Mammary epithelial cell (primary cell): ENCODE measurements at regions of chr6 and their contacts with region 1.

Region 1: GRCh38 chr6:111259089-111259831 is 172.0 kb downstream of the SLC16A10 start:
- DNase-seq: peak; percentile 98
- H3K4me3 ChIP-seq: peak overlapping the region; percentile 65 to 84 (median 80)
- H3K27ac ChIP-seq: peak overlapping the region; percentile 68
- H3K4me1 ChIP-seq: peaks cover 22% of the 10 kb centered on the region
- H3K27me3 ChIP-seq: no peaks in the 10 kb centered on the region
- CTCF ChIP-seq: peak; percentile 94 to 96

Region 2: GRCh38 chr6:111057074-111057752 is 202.0 kb before region 1 on chr6:
- CTCF ChIA-PET with region 1: no interaction called
- dilution Hi-C with region 1: no loop called
- in situ Hi-C with region 1: no loop called
- intact Hi-C with region 1: loop called (anchors 1 kb)
- DNase-seq: peak; percentile 37
- H3K4me3 ChIP-seq: no peak overlapping the region
- H3K27ac ChIP-seq: no peak overlapping the region
- H3K4me1 ChIP-seq: no peaks in the 10 kb centered on the region
- H3K27me3 ChIP-seq: peaks cover 1% of the 10 kb centered on the region
- CTCF ChIP-seq: peak; percentile 75 to 80

Region 3: DNA sequence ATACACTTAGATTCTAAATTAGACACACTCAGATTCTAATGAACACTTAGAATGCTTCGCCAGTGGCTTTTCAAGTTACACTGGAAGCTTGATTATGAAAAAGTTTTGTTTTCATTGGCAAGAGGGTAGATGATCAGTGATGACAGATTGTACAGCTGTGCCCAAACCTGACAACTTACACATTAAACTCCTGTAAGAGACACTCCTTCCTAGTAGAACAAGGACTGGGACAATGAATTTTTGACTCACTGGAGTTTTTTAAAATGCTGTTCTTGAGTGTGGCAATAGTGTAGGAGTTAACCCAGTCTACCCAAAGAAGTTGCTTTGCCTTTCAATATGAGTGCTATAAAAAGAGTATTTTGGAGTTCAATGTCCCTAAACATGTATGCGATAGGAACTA is 31.2 kb before region 1 on chr6:
- CTCF ChIA-PET with region 1: no interaction called
- dilution Hi-C with region 1: no loop called
- in situ Hi-C with region 1: no loop called
- intact Hi-C with region 1: no loop called
- DNase-seq: peak; percentile 81
- H3K4me3 ChIP-seq: no peak overlapping the region
- H3K27ac ChIP-seq: peak overlapping the region; percentile 88
- H3K4me1 ChIP-seq: peaks cover 25% of the 10 kb centered on the region
- H3K27me3 ChIP-seq: no peaks in the 10 kb centered on the region
- CTCF ChIP-seq: no peak

Region 4: GRCh38 chr6:111483736-111484632 is 224.7 kb after region 1 on chr6:
- CTCF ChIA-PET with region 1: interaction called, 9 read pairs
- dilution Hi-C with region 1: no loop called
- in situ Hi-C with region 1: no loop called
- intact Hi-C with region 1: loop called (anchors 1 kb)
- DNase-seq: peak; percentile 91
- H3K4me3 ChIP-seq: peak overlapping the region; percentile 65 to 89 (median 84)
- H3K27ac ChIP-seq: peak overlapping the region; percentile 81
- H3K4me1 ChIP-seq: peaks cover 21% of the 10 kb centered on the region
- H3K27me3 ChIP-seq: no peaks in the 10 kb centered on the region
- CTCF ChIP-seq: no peak

Region 5: GRCh38 chr6:111605100-111605751 is 346.0 kb after region 1 on chr6:
- CTCF ChIA-PET with region 1: interaction called, 3 read pairs
- dilution Hi-C with region 1: no loop called
- in situ Hi-C with region 1: no loop called
- intact Hi-C with region 1: loop called (anchors 1 kb)
- DNase-seq: peak; percentile 54
- H3K4me3 ChIP-seq: peak overlapping the region; percentile 61 to 85 (median 83)
- H3K27ac ChIP-seq: peak overlapping the region; percentile 97
- H3K4me1 ChIP-seq: peaks cover 41% of the 10 kb centered on the region
- H3K27me3 ChIP-seq: no peaks in the 10 kb centered on the region
- CTCF ChIP-seq: no peak

Region 6: GRCh38 chr6:111657146-111657545 is 397.9 kb after region 1 on chr6:
- CTCF ChIA-PET with region 1: no interaction called
- dilution Hi-C with region 1: no loop called
- in situ Hi-C with region 1: no loop called
- intact Hi-C with region 1: loop called (anchors 5 kb)
- DNase-seq: peak; percentile 54
- H3K4me3 ChIP-seq: no peak overlapping the region
- H3K27ac ChIP-seq: no peak overlapping the region
- H3K4me1 ChIP-seq: peaks cover 10% of the 10 kb centered on the region
- H3K27me3 ChIP-seq: no peaks in the 10 kb centered on the region
- CTCF ChIP-seq: no peak